ENCODE measurements at regions of chr11 and their contacts with region 1.

Region 1: GRCh38 chr11:16632295-16633200 is 105.9 kb upstream of the C11orf58 start:
- DNase-seq: no peak
- ATAC-seq: no peak

Region 2: GRCh38 chr11:15901054-15901453 is 731.5 kb before region 1 on chr11:
- intact Hi-C with region 1: loop called (anchors 10 kb)
- DNase-seq: no peak
- ATAC-seq: peak; percentile 84

Region 3: DNA sequence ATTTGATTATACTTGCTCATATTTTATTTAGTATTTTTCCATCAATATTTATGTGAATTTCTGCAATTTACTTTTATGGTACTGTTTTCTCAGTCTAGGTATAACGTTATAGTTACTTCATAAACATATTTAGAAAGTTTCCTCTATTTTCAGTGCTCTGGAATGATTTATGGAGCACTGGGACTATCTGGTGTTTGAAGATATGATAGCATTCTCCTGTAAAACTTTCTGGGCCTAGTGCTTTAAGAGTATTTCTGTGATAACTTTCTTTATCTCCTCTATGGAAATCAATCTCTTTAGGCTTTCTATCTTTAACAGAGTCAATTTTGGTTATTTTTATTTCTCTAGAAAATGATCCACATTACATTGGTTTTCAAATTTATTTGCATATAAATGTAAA is 361.3 kb before region 1 on chr11:
- intact Hi-C with region 1: no loop called
- DNase-seq: no peak
- ATAC-seq: no peak

Measured in Right ventricle myocardium superior (tissue), 1 donor.